ENCODE measurements at regions of chr15 and their contacts with region 1.

Region 1: GRCh38 chr15:70810916-70811578 is 42.9 kb downstream of the LARP6 start:
- DNase-seq: no peak
- H3K4me3 ChIP-seq: no peak overlapping the region
- H3K27ac ChIP-seq: no peak overlapping the region
- H3K4me1 ChIP-seq: peaks cover 0 to 21% (median 3%) of the 10 kb centered on the region in 3 donors
- H3K27me3 ChIP-seq: no peaks in the 10 kb centered on the region
- CTCF ChIP-seq: no peak
- POLR2A ChIP-seq: no peak

Region 2: DNA sequence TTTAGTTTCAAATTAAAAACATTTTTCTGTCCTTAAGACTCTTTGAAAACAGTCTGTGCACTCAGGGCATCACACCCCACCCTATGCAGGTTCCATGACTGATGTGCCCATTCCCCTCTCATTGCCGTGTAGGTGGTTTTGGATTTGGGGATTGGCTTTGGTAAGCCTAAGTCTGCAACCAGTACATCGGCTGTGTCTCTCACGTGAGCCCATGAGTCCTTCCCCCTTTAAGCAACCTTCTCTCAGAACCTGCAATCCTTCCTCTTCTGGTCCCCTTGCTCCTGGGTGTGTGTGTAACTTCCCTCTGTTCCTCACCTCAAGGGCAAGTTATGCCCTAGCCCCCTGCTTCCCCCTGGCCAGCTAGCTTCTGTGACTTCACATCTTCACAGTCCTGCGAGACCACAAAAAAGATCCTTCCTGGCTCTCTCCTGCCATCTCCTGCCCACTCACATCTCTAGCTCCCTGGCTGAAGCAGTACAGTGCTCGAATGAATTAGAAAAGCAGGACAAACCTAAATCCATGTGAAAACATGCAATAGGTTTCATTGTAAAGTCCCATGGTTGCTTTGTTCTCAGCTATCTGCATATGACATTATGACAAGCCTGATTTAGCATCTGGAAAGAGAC is 174.4 kb before region 1 on chr15:
- intact Hi-C with region 1: no loop called
- DNase-seq: no peak
- H3K4me3 ChIP-seq: no peak overlapping the region
- H3K27ac ChIP-seq: no peak overlapping the region
- H3K4me1 ChIP-seq: peaks cover 0 to 34% (median 0%) of the 10 kb centered on the region in 3 donors
- H3K27me3 ChIP-seq: peaks cover 0 to 35% (median 0%) of the 10 kb centered on the region in 4 donors
- CTCF ChIP-seq: peak in 1 of 6 experiments; percentile 11
- POLR2A ChIP-seq: no peak

Region 3: DNA sequence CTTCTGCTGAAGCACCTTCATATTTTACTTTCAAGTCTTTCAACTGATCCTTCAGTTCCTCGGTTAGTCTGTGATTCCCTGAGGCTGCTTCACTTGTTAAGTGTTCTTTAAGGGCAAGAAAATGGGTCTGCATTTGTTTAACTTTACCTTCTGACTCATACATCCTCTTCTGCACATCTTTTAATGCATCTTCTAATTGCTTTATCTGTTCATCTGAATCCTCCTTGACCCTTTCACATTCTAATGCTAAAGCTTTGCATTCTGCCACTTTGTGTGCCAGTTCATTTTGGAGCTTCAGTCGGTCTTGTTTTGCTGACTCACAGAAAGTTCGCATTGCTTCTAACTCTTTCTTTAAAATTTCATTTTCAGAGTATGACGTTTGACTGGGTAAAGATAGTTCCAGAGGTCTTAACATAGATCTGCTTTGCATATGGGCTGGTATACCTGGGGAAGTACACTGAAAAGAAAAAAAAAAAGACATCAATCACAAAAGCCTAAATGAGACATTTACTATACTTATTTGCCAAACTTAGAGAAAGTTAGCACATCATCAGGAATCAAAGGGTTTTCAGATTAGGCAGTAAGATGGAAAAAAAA is 141.9 kb before region 1 on chr15:
- intact Hi-C with region 1: no loop called
- DNase-seq: no peak
- H3K4me3 ChIP-seq: no peak overlapping the region
- H3K27ac ChIP-seq: no peak overlapping the region
- H3K4me1 ChIP-seq: peaks cover 0 to 4% (median 0%) of the 10 kb centered on the region in 3 donors
- H3K27me3 ChIP-seq: no peaks in the 10 kb centered on the region
- CTCF ChIP-seq: no peak
- POLR2A ChIP-seq: no peak

Region 4: GRCh38 chr15:70679919-70680231 is 131.2 kb before region 1 on chr15:
- intact Hi-C with region 1: loop called (anchors 5 kb)
- DNase-seq: no peak
- H3K4me3 ChIP-seq: no peak overlapping the region
- H3K27ac ChIP-seq: no peak overlapping the region
- H3K4me1 ChIP-seq: peaks cover 0 to 20% (median 0%) of the 10 kb centered on the region in 3 donors
- H3K27me3 ChIP-seq: no peaks in the 10 kb centered on the region
- CTCF ChIP-seq: no peak
- POLR2A ChIP-seq: no peak

Region 5: DNA sequence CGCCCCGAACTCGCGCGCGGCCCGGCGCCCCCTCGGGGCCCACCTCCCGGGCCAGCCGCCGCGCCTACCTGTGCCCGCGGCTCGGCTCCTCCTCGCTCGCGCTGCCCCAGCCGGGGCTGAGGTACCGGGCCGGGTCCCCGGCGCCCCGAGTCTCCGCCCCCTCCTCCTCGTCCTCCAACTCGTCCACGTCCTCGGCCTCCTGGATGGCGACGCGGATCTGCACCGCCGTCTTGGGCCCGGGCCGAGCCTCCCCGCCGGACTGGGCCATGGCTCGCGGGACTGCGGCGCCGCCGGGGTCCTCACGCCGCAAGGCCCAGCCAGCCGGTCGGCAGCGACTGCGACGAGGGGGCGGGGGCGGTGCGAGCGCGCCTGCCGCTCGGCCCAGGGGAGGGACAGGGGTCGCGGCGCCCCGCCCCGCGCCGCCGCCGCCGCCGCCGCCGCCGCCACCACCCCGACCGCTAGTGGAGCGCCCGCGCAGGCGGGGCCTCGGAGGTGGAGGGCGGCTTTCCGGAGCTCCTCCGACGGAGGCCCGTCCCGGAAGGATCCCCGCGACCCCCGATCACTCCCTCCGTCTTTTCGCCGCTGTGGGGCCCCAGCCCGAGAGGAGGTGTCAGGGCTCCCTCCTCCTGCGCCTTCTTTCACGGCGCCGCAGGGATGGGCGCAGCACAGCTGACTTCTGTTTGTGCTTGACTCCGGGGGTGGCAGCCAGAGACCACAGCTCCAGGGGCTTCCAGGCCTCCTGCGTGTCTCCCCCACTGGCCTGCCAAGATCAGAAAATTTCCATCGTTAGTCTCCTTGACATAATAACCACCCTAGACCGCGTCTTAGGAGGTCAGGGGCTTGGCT is 43.0 kb after region 1 on chr15 and contains the start of gene LARP6:
- intact Hi-C with region 1: no loop called
- DNase-seq: no peak
- H3K4me3 ChIP-seq: peak within 1 kb of the TSS; percentile 46 to 87 (median 64)
- H3K27ac ChIP-seq: peak within 1 kb of the TSS; percentile 76 to 94 (median 88)
- H3K4me1 ChIP-seq: peaks cover 0 to 53% (median 23%) of the 10 kb centered on the region in 3 donors
- H3K27me3 ChIP-seq: peaks cover 0 to 42% (median 0%) of the 10 kb centered on the region in 4 donors
- CTCF ChIP-seq: no peak
- POLR2A ChIP-seq: peak in 2 of 4 donors; percentile 61 to 73
- total RNA-seq, gene LARP6: 0.30 to 18.7 (median 2.8) TPM

Measured in esophagus squamous epithelium (tissue), 5 donors.